ENCODE measurements at regions of chr1 and their contacts with region 1.

Region 1: DNA sequence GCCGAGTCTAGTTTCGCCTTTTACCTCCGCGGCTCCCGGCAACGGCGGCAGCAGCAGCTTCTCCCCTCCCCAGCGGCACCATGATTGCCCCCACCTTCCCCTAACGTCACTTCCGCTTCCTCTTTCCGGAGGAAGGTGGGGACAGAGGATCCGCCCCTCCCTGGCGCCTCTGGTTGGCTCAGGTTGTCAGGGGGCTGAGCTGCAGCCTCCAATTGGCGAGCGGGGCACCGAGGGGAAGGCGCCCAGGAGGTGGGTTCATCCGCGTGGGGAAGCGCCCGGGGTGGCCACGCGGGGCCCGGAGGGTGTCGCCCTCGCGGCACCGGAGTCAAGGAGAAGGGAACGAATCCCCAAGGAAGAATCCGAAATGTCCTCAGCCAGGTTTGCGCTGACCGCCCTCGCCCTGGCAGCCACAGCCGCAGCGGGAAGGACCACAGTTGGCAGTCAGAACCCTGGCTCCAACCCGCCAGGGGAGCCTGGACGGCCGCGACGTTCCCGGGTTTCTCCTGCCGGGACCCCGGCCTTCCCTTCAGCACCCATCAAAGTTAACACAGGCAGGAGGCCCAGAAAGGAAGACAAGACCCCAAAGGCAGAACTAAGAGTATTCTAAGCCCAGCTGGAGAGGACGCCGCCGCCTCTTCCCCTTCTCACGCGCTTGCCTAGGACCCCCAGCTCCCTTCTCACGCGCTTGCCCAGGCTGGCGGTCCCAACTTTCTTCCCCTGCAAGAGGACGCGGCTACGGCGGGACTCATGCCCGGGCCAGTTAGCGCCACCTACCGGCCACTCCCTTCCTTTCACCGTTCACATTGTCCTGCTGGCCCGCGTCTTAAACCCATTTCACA is at the start of gene MTF1:
- DNase-seq: peak; percentile 84
- ATAC-seq: peak; percentile 99
- H3K4me3 ChIP-seq: peak within 1 kb of the TSS; percentile 96
- H3K27ac ChIP-seq: peak within 1 kb of the TSS; percentile 88
- H3K4me1 ChIP-seq: peaks cover 14% of the 10 kb centered on the region
- H3K27me3 ChIP-seq: no peaks in the 10 kb centered on the region
- CTCF ChIP-seq: peak; percentile 87 to 91 (median 87)
- EP300 ChIP-seq: no peak; a peak in 1 of 4 replicates
- POLR2A ChIP-seq: peak; percentile 90
- RAD21 ChIP-seq: peak; percentile 59
- polyA plus RNA-seq, gene MTF1: 2.8 to 4.4 TPM

Region 2: DNA sequence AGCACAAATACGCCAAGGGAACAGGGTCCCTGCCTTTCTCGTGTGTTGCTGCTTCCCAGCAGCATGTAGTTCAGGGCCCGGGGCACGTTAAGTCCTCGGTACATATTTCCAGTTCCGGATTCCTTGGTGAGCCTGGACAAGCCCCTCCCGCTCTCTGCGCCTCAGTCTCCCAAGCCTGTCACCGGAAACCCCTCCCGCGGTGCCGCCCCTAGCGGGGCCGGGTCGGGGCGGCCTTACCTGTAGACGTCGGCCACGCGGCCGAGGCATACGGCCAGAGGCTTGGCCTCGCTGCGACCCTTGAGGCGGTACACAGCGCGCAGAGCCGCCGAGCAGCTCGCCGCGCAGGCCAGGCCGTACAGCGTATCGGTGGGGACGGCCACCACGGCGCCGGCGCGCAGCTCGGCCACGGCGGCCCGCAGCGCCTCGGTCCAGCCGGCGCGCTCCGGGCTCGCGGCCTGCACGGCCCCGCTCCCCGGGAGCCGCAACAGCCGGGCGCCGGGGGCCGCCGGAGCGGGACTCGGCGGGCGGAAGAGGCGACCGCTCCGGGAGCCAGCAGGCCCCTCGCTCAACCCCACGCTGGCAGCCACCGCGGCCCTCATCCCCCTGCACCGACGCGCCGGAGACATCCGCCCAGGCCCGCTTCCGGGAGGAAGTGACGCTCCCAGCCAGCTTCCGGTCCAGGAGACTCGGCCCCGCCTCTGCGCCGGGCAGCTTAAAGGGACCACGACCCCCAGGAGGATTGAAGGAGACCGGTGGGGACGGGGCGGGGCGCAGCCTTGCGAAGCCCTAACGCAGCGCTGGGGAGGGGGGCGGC is 52.0 kb before region 1 on chr1 and contains the starts of genes C1orf122 and YRDC:
- CTCF ChIA-PET with region 1: interaction called, 17 read pairs
- POLR2A ChIA-PET with region 1: interaction called, 17 read pairs
- RAD21 ChIA-PET with region 1: interaction called, 19 read pairs
- SMC1A ChIA-PET with region 1: interaction called, 9 read pairs
- in situ Hi-C with region 1: no loop called
- intact Hi-C with region 1: loop called (anchors 1 kb)
- DNase-seq: peak; percentile 35
- ATAC-seq: peak; percentile 93
- H3K4me3 ChIP-seq: peak within 1 kb of the TSS; percentile 91
- H3K27ac ChIP-seq: peak within 1 kb of the TSS; percentile 81
- H3K4me1 ChIP-seq: peaks cover 11% of the 10 kb centered on the region
- H3K27me3 ChIP-seq: no peaks in the 10 kb centered on the region
- CTCF ChIP-seq: no peak
- EP300 ChIP-seq: no peak
- POLR2A ChIP-seq: peak; percentile 98
- RAD21 ChIP-seq: no peak
- polyA plus RNA-seq, gene C1orf122: 1.6 to 8.4 TPM
- polyA plus RNA-seq, gene YRDC: 4.5 to 15.3 TPM

Region 3: DNA sequence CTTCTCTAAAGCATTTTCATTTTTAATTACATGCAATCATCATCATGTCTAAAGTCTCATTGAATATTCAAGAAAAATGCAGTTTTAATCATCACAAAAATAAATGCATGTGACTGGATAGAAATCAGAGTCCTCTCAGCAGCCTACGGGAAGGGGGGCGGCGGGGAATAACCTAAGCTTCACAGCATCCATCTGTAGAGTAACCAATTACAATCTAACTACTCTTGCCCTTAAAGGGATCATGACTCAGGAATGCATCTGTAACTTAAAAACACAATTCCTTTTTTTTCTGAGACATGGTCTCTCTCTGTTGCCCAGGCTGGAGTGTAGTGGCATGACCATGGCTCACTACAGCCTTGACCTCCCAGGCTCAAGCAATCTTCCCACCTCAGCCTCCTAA is 22.9 kb before region 1 on chr1:
- CTCF ChIA-PET with region 1: interaction called, 12 read pairs
- POLR2A ChIA-PET with region 1: no interaction called
- RAD21 ChIA-PET with region 1: no interaction called
- SMC1A ChIA-PET with region 1: interaction called, 7 read pairs
- in situ Hi-C with region 1: no loop called
- intact Hi-C with region 1: no loop called
- DNase-seq: no peak
- ATAC-seq: no peak
- H3K4me3 ChIP-seq: no peak overlapping the region
- H3K27ac ChIP-seq: no peak overlapping the region
- H3K4me1 ChIP-seq: no peaks in the 10 kb centered on the region
- H3K27me3 ChIP-seq: no peaks in the 10 kb centered on the region
- CTCF ChIP-seq: no peak
- EP300 ChIP-seq: no peak
- POLR2A ChIP-seq: no peak
- RAD21 ChIP-seq: no peak

Region 4: GRCh38 chr1:37846647-37847339 is 12.9 kb before region 1 on chr1:
- CTCF ChIA-PET with region 1: interaction called, 23 read pairs
- POLR2A ChIA-PET with region 1: interaction called, 12 read pairs
- RAD21 ChIA-PET with region 1: interaction called, 12 read pairs
- SMC1A ChIA-PET with region 1: interaction called, 11 read pairs
- in situ Hi-C with region 1: no loop called
- intact Hi-C with region 1: no loop called
- DNase-seq: peak; percentile 13
- ATAC-seq: peak; percentile 74
- H3K4me3 ChIP-seq: peak overlapping the region; percentile 34
- H3K27ac ChIP-seq: peak overlapping the region; percentile 59
- H3K4me1 ChIP-seq: peaks cover 7% of the 10 kb centered on the region
- H3K27me3 ChIP-seq: no peaks in the 10 kb centered on the region
- CTCF ChIP-seq: no peak
- EP300 ChIP-seq: no peak
- POLR2A ChIP-seq: no peak
- RAD21 ChIP-seq: no peak

Region 5: DNA sequence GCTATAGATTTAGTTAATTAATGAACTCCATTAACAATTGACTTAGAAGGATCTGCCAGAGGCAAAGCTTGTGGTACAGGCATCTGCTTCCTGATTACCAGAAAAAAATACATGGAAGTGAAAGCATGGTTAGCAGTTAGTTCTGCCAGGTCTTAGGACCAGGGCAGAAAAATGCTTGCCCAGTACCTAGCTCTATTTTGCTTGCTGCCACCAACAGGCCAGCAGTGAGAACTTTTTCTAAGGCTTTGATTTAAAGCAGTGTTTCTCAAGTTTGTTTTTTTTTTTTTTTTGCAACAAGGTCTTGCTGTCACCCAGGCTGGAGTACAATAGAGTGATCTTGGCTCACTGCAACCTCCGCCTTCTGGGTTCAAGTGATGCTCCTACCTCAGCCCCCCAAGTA is 16.1 kb after region 1 on chr1:
- CTCF ChIA-PET with region 1: interaction called, 11 read pairs
- POLR2A ChIA-PET with region 1: interaction called, 5 read pairs
- RAD21 ChIA-PET with region 1: interaction called, 3 read pairs
- SMC1A ChIA-PET with region 1: interaction called, 3 read pairs
- in situ Hi-C with region 1: no loop called
- intact Hi-C with region 1: no loop called
- DNase-seq: no peak
- ATAC-seq: peak; percentile 24; the same call in 1 of the 3 replicates
- H3K4me3 ChIP-seq: no peak overlapping the region
- H3K27ac ChIP-seq: no peak overlapping the region
- H3K4me1 ChIP-seq: no peaks in the 10 kb centered on the region
- H3K27me3 ChIP-seq: no peaks in the 10 kb centered on the region
- CTCF ChIP-seq: no peak; a peak in 1 of 6 replicates
- EP300 ChIP-seq: no peak
- POLR2A ChIP-seq: no peak
- RAD21 ChIP-seq: no peak